GM13977 (cell line): ENCODE measurements at regions of chr12 and their contacts with region 1.

Region 1: DNA sequence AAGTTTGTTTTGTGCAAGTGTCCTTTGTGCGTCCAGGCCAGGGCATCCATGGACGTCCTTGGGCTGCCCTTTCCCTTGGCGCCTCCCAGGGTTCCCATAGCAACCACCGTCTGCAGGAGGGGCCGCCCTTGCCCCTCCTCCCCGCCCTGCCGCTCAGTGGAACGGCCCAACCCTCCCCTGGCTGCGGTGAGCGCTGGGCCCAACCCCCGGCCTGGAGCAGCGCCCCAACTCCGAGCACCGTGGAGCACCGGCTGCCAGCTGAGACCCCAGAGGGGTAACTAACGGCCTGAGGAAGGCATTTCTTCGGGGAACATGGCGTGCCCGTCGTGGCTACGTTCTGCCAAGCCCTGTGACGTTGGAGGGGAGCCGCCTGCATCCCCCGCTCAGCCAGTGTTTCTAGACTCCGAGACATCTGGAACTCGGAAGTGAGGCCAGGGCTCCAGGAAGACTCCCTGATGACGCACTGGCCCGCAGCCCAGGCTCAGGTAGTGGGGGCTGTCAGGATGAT is 5.3 kb upstream of the ACACB start:
- DNase-seq: peak; percentile 57
- CTCF ChIP-seq: no peak

Region 2: DNA sequence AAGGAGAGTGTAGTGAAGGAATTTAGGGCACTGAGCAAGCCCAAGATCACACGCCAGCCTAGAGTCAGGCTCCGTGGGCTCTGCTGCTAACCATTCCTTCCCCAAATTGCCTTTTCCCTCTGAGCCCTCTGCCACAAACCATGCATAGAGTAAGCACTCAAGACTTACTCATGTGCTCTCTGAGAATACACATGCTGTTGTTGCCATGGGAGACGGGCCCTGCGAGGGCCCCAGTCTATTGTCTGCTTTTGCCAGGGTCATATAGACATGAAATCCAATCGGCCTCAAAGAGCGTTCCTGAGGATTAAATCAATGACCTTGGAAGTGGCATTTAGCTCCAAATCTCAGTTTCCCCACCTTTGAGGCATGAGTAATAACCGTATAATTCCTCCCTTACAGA is 1030.7 kb before region 1 on chr12:
- in situ Hi-C with region 1: no loop called
- DNase-seq: no peak
- CTCF ChIP-seq: no peak

Region 3: GRCh38 chr12:108333898-108334699 is 776.9 kb before region 1 on chr12:
- in situ Hi-C with region 1: no loop called
- DNase-seq: peak; percentile 60
- CTCF ChIP-seq: no peak

Region 4: GRCh38 chr12:108865169-108865568 is 245.9 kb before region 1 on chr12:
- in situ Hi-C with region 1: no loop called
- DNase-seq: no peak
- CTCF ChIP-seq: no peak

Region 5: GRCh38 chr12:109027767-109028166 is 83.3 kb before region 1 on chr12:
- in situ Hi-C with region 1: no loop called
- DNase-seq: no peak
- CTCF ChIP-seq: no peak

Region 6: GRCh38 chr12:109393437-109394345 is 282.6 kb after region 1 on chr12:
- in situ Hi-C with region 1: loop called (anchors 25 kb)
- DNase-seq: peak; percentile 76
- CTCF ChIP-seq: peak; percentile 80